Posterior cingulate gyrus (tissue), 11 donors: ENCODE measurements at regions of chr3 and their contacts with region 1.

Region 1: DNA sequence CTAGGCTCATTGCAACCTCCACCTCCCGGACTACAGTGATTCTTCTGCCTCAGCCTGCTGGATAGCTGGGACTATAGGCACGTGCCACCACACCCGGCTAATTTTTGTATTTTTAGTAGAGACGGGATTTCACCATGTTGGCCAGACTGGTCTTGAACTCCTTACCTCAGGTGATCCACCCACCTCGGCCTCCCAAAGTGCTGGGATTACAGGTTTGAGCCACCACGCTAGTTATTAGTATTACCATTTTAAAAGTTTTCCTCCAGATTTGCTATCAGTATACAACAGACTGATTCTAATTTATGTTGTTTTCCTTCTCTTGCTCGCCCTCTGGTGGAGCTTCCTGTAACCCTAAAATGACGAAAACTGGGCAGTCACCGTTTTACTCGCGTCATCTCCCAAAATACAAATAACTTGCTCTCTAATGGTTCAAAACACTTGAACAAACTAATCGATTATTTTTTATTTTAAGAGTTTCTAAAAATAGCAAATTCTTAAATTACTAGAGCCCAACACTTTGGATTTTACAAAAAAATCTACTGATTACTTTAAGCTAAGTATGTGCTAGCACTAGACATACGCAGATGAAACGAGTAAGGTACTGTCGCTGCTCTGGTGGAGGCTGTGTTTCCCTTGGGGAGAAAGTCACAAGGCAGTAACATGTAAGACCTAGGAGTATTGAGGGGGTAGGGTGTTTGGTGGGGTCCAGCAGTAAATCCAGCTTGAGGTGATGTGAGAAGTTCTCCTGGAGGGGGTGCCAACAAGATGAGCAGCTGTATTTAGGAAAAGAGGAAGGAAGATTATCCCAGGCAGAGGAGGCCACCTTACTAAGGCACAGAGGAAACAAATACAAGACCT is 203.3 kb downstream of the MBNL1 start:
- DNase-seq: peak in 8 of 10 donors; percentile 23 to 84 (median 60)

Region 2: DNA sequence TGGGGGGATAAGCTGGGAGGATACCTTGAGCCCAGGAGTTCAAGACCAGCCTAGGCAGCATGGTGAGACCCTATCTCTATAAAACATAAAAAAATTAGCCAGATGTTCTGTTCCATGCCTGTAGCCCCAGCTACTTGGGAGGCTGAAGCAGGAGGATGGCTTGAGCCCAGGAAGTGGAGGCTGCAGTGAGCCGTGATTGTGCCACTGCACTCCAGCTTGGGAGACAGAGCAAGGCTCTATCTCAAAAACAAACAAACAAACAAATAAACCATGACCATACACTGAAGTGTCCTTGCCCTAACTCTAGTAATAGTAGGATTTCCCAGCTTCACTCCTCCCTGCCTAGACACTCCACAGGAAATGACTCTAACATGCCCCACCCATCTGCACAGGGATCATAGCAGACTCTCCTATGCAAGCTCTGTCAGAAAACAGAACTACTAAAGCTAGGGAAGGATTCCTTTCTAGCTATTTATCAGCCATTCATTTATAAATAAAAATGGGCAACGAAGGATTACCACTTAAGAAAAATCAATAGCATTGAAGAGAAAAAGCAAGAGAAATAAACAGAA is 1772.9 kb before region 1 on chr3:
- intact Hi-C with region 1: no loop called
- DNase-seq: no peak

Region 3: GRCh38 chr3:152071924-152072323 is 400.1 kb before region 1 on chr3:
- intact Hi-C with region 1: loop called (anchors 5 kb)
- DNase-seq: no peak

Region 4: DNA sequence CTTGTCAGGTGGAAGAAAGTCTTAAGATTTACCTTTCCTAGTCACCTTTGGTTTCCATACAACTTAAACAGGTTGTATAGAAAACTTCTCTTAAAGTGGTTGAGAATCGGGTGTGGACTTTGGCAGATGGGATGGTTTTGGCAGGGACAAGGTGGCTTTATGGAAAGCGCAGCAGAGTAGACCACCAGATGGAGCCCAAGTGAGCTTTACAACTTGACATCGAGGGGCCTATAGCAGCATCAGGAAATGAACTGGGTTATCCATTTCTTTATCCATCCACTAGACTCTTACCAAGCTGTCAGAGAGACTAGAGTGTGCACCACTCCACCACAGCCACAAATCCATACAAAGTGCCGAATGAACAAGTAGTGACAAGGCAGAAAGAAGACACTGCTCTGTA is 288.6 kb before region 1 on chr3:
- intact Hi-C with region 1: loop called (anchors 5 kb)
- DNase-seq: peak in 6 of 10 donors; percentile 12 to 73 (median 39)

Region 5: DNA sequence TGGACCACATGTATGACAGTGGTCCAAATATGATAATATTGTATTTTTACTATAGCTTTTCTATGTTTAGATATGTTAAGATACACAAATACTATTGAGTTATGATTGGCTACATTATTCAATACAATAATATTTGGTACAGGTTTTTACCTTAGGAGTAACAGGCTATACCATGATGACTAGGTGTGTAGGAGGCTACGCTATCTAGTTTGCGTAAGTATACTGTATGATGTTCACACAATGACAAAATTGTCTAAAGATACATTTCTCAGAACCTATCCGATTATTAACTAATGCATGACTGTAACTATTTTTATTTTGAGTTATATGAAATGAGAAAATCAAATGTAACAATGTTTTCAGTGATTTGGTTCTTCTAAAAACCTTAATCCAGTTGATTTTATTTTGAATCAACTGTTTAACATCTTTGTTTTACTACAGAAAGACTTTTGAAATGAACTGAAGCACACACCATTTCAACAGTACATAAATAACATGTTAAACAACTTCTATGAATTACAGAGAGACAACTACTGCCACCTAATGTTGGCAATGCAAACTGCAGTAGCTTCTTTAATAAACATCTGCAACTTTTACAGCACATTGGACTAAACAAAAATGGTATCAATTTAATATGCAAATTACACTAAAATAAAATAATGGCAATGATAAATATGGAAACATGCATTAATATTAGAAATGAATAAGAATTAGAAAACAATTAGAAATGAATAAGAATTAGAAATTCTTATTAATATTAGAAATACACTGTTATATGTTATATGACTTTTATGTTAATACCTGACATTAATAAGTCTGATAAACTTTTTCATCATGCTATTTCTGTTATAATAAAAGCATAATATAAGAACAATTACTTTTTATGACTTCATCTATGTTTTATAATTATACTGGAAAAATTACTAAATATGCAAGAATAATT is 52.4 kb after region 1 on chr3:
- intact Hi-C with region 1: loop called (anchors 5 kb)
- DNase-seq: peak in 1 of 10 donors; percentile 31

Region 6: DNA sequence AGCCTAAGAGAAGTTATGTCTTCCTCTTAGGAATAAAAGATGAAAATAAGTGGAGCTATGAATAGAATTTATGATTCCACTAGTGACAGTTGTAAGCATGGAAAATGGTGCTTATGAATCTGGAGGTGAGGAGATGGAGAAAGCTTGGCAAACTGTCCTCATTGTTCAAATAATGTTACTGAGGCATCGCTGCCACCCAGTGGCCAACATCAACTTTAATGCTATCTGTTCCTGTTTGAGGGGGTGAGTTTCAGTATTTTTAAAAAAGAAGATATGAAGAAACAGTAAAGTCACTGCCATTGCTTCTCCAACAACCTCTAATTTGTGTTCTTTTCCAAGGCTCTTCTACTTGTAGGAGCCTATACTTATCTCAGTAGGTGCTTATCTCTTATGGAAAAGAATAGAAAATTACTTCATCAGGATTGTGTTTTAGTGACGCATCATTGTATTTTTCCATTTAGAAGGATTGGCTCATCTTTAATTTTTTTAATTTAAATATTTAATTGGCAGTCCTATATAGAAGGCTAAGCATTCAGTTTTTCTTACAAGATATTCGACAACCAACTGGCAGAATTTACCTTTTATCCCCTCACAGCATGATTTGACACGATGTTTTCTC is 102.5 kb after region 1 on chr3:
- intact Hi-C with region 1: loop called (anchors 5 kb)
- DNase-seq: peak in 7 of 10 donors; percentile 48 to 90 (median 60)

Region 7: GRCh38 chr3:152606146-152606545 is 134.1 kb after region 1 on chr3:
- intact Hi-C with region 1: no loop called
- DNase-seq: peak in 1 of 10 donors; percentile 35